Esophagus muscularis mucosa (tissue), 4 donors: ENCODE measurements at regions of chr1 and their contacts with region 1.

Region 1: DNA sequence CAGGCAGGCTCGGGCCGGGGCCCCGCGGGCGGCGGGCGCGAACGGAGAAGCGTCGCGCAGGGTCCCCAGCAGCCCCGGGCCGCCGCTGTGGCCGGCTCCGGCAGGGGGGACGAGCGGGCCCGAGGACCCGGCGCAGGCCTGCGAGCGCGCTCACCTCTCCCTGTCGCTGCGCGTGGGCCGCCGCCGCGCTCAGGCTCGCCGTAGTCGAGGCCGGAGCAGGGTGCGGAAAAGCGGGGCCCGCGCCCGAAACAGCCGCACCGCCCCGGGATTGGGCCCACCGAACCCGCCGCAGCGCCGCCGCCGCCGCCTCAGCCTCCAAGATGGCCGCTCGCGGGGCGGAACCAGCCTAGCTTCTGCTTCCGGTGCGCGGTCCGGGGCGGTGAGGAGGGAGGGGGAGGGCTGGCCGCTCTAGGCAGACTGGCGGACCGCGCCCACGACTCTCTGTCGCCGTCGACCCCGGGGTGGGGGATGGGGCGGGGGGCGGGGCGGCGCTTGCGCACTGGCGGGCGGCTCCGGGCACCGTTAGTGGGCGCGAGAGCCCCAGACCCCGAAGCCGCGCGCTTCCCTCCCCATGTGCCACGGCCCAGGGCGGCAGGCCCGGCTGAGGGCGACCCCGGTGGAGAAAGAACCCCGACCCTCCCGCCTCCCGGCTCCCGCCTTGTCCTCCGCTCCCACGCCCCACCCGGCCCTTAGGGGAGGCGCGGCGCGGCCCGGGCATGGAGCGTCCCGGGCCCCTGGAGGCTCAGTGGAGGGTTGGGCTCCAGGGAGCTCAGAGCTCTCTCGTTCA is at the start of gene UBE2J2:
- DNase-seq: peak; percentile 97
- H3K4me3 ChIP-seq: peak within 1 kb of the TSS; percentile 69 to 98 (median 96)
- H3K27ac ChIP-seq: peak within 1 kb of the TSS; percentile 81 to 92 (median 86)
- H3K4me1 ChIP-seq: peaks cover 40 to 64% (median 50%) of the 10 kb centered on the region in 4 donors
- H3K27me3 ChIP-seq: no peaks in the 10 kb centered on the region
- CTCF ChIP-seq: no peak
- EP300 ChIP-seq: no peak
- POLR2A ChIP-seq: peak; percentile 30
- total RNA-seq, gene UBE2J2: 34.9 to 61.4 (median 49.5) TPM

Region 2: GRCh38 chr1:1231400-1232223 is 42.1 kb before region 1 on chr1 and contains the start of gene SDF4:
- intact Hi-C with region 1: loop called (anchors 5 kb)
- DNase-seq: peak; percentile 99
- H3K4me3 ChIP-seq: peak within 1 kb of the TSS; percentile 81 to 98 (median 92)
- H3K27ac ChIP-seq: peak within 1 kb of the TSS; percentile 89 to 97 (median 94)
- H3K4me1 ChIP-seq: peaks cover 32 to 68% (median 50%) of the 10 kb centered on the region in 4 donors
- H3K27me3 ChIP-seq: no peaks in the 10 kb centered on the region
- CTCF ChIP-seq: no peak
- EP300 ChIP-seq: no peak
- POLR2A ChIP-seq: peak; percentile 48
- total RNA-seq, gene SDF4: 88.5 to 125 (median 107) TPM

Region 3: DNA sequence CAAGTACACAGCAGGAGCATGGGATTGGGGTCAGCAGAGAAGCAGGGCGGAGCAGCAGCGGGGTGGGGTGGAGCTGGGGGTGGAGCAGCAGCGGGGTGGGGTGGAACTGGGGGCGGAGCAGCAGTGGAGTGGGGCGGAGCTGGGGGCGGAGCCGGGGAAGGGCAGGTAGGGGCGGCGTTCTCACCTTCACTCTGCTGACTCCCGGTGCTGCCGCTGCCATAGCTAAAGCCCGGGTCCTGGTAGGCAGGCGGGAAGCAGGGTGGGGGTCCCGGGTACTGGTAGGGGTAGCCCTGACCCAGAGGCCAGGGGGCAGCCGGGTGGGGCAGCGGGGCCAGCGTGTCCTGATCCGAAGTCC is 64.1 kb after region 1 on chr1:
- intact Hi-C with region 1: no loop called
- DNase-seq: no peak
- H3K4me3 ChIP-seq: no peak overlapping the region
- H3K27ac ChIP-seq: no peak overlapping the region
- H3K4me1 ChIP-seq: peaks cover 0 to 9% (median 3%) of the 10 kb centered on the region in 4 donors
- H3K27me3 ChIP-seq: no peaks in the 10 kb centered on the region
- CTCF ChIP-seq: no peak
- EP300 ChIP-seq: no peak
- POLR2A ChIP-seq: no peak